A549 (cell line): ENCODE measurements at regions of chr17 and their contacts with region 1.

Region 1: DNA sequence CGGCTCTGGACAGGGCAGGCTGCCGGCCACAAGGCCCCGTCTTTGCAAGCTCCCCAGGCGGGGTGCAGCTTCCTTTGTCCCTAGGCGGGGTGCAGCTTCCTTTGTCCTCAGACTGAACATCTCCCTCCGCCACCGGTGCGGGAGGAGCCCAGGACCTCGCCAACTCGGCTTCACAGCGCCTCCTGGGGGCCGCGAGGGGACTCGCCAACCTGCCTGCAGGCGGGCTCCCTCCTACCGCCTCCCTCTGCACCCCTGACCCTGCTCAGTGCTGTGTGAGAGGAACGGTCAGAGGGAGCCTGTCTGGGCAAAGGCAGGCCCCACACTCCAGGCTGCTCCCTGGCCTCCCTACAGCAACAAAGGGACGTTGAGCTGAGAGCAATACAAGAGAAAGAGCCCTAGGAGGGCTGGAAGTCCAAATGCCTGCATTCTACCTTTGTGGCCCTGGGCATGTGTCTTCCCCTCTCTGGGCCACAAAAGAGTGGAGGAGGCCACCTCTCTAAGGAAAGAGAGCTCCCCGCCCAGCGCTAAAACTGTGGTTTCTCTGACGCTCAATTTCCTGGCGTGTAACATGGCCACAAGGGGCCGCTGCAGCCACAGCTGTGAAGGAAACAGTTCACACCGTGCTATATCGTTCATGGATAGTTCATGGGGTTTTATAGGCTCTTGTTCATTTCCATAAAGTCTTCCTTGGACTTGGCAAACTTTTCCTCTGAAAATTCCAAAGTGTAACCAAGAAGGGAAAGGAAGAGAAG is 20.9 kb upstream of the KRT19 start:
- DNase-seq: peak; percentile 94 to 96
- ATAC-seq: peak; percentile 79 to 91
- H3K4me3 ChIP-seq: peak overlapping the region; percentile 33
- H3K27ac ChIP-seq: peak overlapping the region; percentile 89 to 96
- H3K4me1 ChIP-seq: peaks cover 40% of the 10 kb centered on the region
- CTCF ChIP-seq: peak; percentile 99
- EP300 ChIP-seq: no peak
- POLR2A ChIP-seq: peak; percentile 16; the same call in 1 of the 2 replicates
- RAD21 ChIP-seq: peak; percentile 93 to 97

Region 2: DNA sequence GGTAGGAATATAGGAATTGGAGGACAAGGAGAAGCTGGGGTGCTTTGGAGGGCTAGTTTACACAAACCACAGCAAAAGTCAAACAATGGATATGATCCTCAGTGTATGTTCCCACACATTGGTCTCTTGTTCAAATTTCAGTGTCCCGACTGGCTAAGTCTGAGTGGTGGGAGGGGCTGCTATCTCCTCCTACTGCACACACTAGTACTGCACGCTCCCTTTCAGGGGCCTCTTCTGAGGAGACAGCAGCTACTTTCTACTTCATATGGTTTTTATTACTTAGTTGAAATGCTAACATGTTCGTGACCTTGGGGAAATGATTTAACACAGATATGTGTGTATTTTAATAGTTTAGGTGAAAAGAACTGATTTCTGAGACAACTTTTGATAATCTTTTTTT is 707.8 kb before region 1 on chr17:
- CTCF ChIA-PET with region 1: interaction called, 26 read pairs
- POLR2A ChIA-PET with region 1: no interaction called
- DNase-seq: no peak
- ATAC-seq: peak in 1 of 2 experiments; percentile 47; a peak in 1 of 6 replicates
- H3K4me3 ChIP-seq: no peak overlapping the region
- H3K27ac ChIP-seq: no peak overlapping the region
- H3K4me1 ChIP-seq: no peaks in the 10 kb centered on the region
- CTCF ChIP-seq: no peak
- EP300 ChIP-seq: no peak
- POLR2A ChIP-seq: no peak
- RAD21 ChIP-seq: no peak

Region 3: GRCh38 chr17:40909351-40909750 is 639.7 kb before region 1 on chr17:
- CTCF ChIA-PET with region 1: interaction called, 246 read pairs
- POLR2A ChIA-PET with region 1: interaction called, 4 read pairs
- DNase-seq: peak; percentile 91 to 92
- ATAC-seq: peak; percentile 91 to 95
- H3K4me3 ChIP-seq: no peak overlapping the region
- H3K27ac ChIP-seq: peak overlapping the region; percentile 62 to 65
- H3K4me1 ChIP-seq: peaks cover 31% of the 10 kb centered on the region
- CTCF ChIP-seq: peak; percentile 98
- EP300 ChIP-seq: no peak
- POLR2A ChIP-seq: no peak
- RAD21 ChIP-seq: peak; percentile 99 to 100

Region 4: GRCh38 chr17:41377546-41377945 is 171.5 kb before region 1 on chr17:
- CTCF ChIA-PET with region 1: interaction called, 20 read pairs
- POLR2A ChIA-PET with region 1: no interaction called
- DNase-seq: no peak
- ATAC-seq: no peak
- H3K4me3 ChIP-seq: no peak overlapping the region
- H3K27ac ChIP-seq: no peak overlapping the region
- H3K4me1 ChIP-seq: peaks cover 10% of the 10 kb centered on the region
- CTCF ChIP-seq: no peak
- EP300 ChIP-seq: no peak
- POLR2A ChIP-seq: no peak
- RAD21 ChIP-seq: no peak

Region 5: GRCh38 chr17:41496820-41497408 is 52.1 kb before region 1 on chr17:
- CTCF ChIA-PET with region 1: interaction called, 163 read pairs
- POLR2A ChIA-PET with region 1: no interaction called
- DNase-seq: peak; percentile 91 to 95
- ATAC-seq: peak; percentile 91 to 99
- H3K4me3 ChIP-seq: no peak overlapping the region
- H3K27ac ChIP-seq: peak overlapping the region; percentile 76 to 88
- H3K4me1 ChIP-seq: peaks cover 27% of the 10 kb centered on the region
- CTCF ChIP-seq: peak; percentile 80
- EP300 ChIP-seq: no peak
- POLR2A ChIP-seq: peak; percentile 43
- RAD21 ChIP-seq: peak; percentile 89 to 92

Region 6: DNA sequence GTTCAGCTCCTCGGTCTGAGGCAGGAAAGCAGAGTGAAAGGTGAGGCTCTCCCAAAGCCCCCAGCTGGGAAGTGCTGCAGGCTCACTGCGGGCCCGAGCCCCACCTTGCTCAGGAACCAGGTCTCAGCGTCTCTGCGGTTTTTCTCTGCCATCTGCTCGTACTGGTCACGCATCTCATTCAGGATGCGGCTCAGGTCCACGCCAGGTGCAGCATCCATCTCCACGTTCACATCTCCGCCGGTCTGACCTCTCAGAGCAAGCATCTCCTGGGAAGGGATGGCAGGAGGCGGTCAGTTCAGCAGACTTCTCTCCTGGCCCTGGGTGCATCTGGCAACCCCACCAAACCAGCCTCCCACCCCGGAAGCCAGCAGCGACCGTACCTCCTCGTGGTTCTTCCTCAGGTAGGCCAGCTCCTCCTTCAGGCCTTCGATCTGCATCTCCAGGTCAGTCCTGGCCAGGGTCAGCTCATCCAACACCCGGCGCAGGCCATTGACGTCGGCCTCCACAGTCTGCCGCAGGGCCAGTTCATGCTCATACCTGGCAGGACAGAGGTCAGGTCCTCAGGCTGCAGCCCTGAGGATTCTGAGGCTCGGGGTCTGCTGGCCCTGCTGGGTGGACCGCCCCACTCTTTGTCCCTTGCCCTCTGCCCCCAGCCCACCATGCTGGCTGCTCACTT is 62.1 kb after region 1 on chr17:
- CTCF ChIA-PET with region 1: interaction called, 28 read pairs
- POLR2A ChIA-PET with region 1: no interaction called
- DNase-seq: no peak
- ATAC-seq: no peak; a peak in 1 of 6 replicates
- H3K4me3 ChIP-seq: no peak overlapping the region
- H3K27ac ChIP-seq: no peak overlapping the region
- H3K4me1 ChIP-seq: peaks cover 12% of the 10 kb centered on the region
- CTCF ChIP-seq: no peak
- EP300 ChIP-seq: no peak
- POLR2A ChIP-seq: no peak
- RAD21 ChIP-seq: no peak